Heart left ventricle (tissue), 16 donors: ENCODE measurements at regions of chr1 and their contacts with region 1.

Region 1: DNA sequence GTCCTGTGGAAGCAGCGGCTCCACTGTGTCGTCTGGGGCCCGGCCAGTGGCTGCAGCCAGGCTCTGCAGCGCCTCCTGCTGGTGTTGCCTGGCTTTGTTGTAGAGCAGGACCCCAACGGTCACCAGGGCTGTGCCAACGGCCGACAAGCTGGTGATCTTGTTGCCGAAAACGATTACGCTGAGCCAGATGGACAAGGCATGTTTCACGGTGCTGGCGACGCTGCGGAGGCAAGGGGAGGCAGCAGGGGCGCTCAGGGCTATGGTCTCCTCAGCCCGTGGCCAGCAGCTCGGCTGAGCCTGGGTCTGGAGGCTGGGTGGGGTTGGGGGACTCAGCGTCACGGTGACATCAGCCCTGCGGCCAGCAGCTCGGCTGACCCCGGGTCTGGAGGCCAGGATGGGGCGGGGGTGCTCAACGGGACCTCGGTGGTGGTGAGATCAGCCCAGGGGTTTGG is 7.0 kb upstream of the CDK11B start:
- DNase-seq: no peak
- ATAC-seq: peak in 1 of 4 donors; percentile 19
- H3K4me3 ChIP-seq: no peak overlapping the region
- H3K27ac ChIP-seq: no peak overlapping the region
- H3K4me1 ChIP-seq: peaks cover 0 to 6% (median 0%) of the 10 kb centered on the region in 12 donors
- H3K27me3 ChIP-seq: no peaks in the 10 kb centered on the region
- CTCF ChIP-seq: peak; percentile 19 to 51 (median 38)
- POLR2A ChIP-seq: no peak

Region 2: GRCh38 chr1:1730870-1731269 is 65.0 kb after region 1 on chr1:
- intact Hi-C with region 1: loop called in 1 of 10 experiments (anchors 1 kb)
- DNase-seq: peak in 1 of 5 donors; percentile 8
- ATAC-seq: no peak
- H3K4me3 ChIP-seq: no peak overlapping the region
- H3K27ac ChIP-seq: no peak overlapping the region
- H3K4me1 ChIP-seq: peaks cover 0 to 16% (median 0%) of the 10 kb centered on the region in 12 donors
- H3K27me3 ChIP-seq: no peaks in the 10 kb centered on the region
- CTCF ChIP-seq: no peak
- POLR2A ChIP-seq: no peak